ENCODE measurements at regions of chr11 and their contacts with region 1.

Region 1: DNA sequence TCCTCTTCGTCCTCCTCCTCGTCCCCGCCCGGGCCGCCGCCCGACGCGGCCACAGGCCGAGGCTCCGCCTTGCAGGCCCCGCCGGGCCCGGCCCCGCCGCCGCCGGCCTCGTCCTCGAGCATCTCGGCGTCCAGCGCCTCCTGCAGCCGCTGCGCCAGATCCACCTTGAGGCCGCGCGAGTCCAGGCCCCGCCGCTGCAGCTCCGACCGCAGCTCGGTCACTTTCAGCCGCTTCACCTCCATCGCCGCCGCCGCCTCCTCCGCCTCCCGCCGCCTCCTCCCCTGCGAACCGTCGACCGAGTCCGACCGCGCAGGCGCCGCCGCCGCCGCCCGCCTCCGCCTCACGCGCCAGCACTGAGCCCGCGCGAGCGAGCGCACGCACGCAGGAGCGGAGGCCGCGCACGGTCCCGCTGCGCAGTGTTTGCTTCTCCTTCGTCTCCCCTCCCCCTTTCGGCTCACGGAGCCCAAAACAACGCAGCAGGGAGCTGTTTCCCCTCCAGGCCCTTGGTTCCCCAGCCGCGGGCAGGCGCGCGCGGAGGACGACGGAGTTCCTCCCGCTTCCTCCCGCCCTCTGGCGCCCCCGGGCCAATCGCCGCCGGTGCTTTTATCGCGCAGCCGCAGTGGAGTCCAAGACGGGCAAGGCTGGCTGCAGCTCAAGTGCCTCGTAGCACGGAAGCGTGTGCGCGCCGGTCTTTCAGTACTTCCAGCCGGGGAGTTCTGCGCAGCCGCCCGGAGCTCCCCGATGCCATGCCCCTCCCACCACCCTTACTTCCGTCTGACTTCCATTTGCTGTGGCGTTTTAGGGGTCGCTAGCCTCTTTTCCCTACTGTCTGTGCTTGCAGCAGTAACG is at the start of gene HNRNPUL2:
- DNase-seq: peak; percentile 97
- ATAC-seq: peak; percentile 89
- H3K4me3 ChIP-seq: peak within 1 kb of the TSS; percentile 91 to 100 (median 94)
- H3K27ac ChIP-seq: peak within 1 kb of the TSS; percentile 99
- H3K4me1 ChIP-seq: peaks cover 46% of the 10 kb centered on the region
- H3K27me3 ChIP-seq: peaks cover 0 to 3% of the 10 kb centered on the region in 2 experiments; a peak in 1 of 5 replicates
- CTCF ChIP-seq: peak; percentile 33
- EP300 ChIP-seq: no peak
- POLR2A ChIP-seq: peak; percentile 87 to 91
- RAD21 ChIP-seq: peak; percentile 53; the same call in 1 of the 2 replicates
- total RNA-seq, gene HNRNPUL2: 8.4 and 9.6 TPM in 2 replicates

Region 2: DNA sequence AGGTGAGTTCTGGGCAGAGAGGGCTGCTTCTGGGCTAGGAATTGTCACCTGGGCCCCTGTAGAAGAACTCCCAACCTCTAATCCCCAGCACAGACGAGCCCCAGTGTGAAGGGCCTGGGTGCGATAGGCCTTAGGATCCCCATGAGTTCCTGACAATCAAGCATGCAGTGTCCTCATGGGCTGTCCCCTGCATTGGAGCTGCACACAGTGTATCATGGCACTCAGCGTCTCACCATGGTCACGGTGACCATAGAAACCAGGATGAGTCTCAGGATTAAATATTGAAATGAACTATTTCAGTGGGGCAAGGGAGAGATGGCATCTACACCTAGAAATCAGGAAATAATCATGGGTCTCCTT is 518.4 kb before region 1 on chr11:
- CTCF ChIA-PET with region 1: no interaction called
- POLR2A ChIA-PET with region 1: no interaction called
- in situ Hi-C with region 1: no loop called
- intact Hi-C with region 1: no loop called
- DNase-seq: no peak
- ATAC-seq: no peak
- H3K4me3 ChIP-seq: no peak overlapping the region
- H3K27ac ChIP-seq: no peak overlapping the region
- H3K4me1 ChIP-seq: no peaks in the 10 kb centered on the region
- H3K27me3 ChIP-seq: peaks cover 0 to 18% of the 10 kb centered on the region in 2 experiments; a peak in 2 of 5 replicates
- CTCF ChIP-seq: no peak
- EP300 ChIP-seq: no peak
- POLR2A ChIP-seq: no peak
- RAD21 ChIP-seq: no peak

Region 3: DNA sequence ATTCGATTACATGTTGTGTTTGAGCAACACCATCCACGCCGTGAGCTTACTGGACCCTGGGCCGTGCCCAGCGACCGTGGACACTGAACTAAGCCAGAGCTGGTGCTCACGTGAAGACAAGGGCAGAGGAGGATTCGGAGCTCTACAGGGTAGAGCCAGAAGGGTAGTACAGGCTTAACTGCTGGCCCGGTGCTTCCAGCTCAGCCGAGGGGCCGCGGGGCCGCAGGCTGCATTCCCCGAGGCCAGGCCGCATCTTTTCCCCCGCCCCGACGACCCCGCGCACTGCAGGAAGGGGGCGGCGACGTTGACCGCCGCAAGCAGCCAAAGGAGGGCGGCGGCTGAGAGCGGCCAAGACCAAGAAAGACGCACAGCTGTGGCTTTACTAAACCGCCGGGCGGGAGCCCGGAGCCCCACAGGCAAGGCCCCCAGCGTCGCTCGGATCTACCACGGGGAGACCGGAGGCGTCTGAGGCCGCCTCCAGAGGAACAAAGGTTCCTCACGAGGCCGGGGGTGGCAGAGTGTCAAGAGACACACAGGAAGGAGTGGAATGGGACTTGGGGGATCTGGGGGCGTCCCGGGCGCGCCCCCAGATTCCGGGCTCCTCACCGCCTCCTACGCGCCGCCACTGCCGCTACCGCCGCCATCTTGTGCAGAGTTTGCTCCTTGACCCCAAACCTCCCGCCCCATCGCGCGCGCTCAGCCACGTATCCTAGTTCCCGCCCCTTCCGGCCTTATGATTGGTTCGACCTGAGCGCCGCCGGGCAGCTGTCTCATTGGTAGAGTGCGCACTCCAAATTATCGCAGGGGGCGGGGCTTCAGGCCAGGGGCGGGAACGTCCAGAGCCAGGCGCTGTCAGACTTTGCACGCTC is 80.9 kb before region 1 on chr11 and contains the start of gene GANAB:
- CTCF ChIA-PET with region 1: no interaction called
- POLR2A ChIA-PET with region 1: interaction called, 13 read pairs
- in situ Hi-C with region 1: no loop called
- intact Hi-C with region 1: no loop called
- DNase-seq: peak; percentile 95
- ATAC-seq: peak; percentile 94
- H3K4me3 ChIP-seq: peak within 1 kb of the TSS; percentile 86 to 96 (median 90)
- H3K27ac ChIP-seq: peak within 1 kb of the TSS; percentile 98
- H3K4me1 ChIP-seq: peaks cover 53% of the 10 kb centered on the region
- H3K27me3 ChIP-seq: no peaks in the 10 kb centered on the region
- CTCF ChIP-seq: no peak
- EP300 ChIP-seq: no peak; a peak in 1 of 4 replicates
- POLR2A ChIP-seq: peak; percentile 92 to 95
- RAD21 ChIP-seq: no peak
- total RNA-seq, gene GANAB: 50.8 and 99.5 TPM in 2 replicates

Region 4: DNA sequence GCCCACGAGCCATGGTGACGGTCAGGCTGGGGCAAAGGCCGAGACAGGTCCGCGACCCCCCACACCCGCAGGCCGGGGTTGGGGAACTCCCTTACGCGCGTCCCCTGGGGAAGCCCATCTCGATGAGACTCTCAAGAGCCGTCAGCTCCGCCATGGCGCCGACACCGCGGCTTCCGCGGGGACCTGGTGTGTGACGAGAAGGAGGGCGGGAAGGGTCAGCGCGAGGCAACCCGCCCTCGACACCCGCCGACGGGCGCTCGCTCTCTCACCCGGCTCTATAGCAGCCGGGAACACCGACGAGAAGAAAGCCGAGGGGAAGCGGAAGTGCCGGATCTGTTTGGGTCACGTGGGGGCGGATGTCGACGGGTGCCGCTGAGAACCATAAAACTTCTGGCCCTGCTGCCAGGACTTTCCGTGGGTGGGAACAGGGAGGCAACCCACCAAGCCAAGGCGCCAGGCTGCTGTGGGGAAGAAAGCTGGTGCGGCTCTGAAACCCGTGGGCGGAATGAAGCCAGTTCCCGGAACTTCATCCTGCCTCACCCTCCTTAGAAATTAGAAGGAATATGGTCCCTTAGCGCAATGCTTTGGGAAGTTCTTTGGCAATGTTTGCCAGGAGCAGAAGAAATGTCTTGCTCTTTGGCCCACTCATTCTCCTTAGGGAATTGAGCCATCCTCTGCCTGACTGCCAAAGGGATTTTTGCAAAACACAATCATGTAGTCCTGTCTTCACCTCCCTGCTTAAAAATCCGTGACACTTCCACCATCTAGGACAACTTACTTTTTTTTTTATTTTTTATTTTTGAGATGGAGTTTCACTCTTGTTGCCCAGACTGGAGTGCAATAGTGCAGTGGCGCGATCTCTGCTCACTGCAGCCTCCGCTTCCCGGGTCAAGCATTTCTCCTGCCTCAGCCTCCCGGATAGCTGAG is 48.1 kb before region 1 on chr11 and contains the start of gene UBXN1:
- CTCF ChIA-PET with region 1: no interaction called
- POLR2A ChIA-PET with region 1: interaction called, 16 read pairs
- in situ Hi-C with region 1: no loop called
- intact Hi-C with region 1: no loop called
- DNase-seq: peak; percentile 79
- ATAC-seq: peak; percentile 79
- H3K4me3 ChIP-seq: peak within 1 kb of the TSS; percentile 88 to 98 (median 94)
- H3K27ac ChIP-seq: peak within 1 kb of the TSS; percentile 86
- H3K4me1 ChIP-seq: peaks cover 37% of the 10 kb centered on the region
- H3K27me3 ChIP-seq: no peaks in the 10 kb centered on the region
- CTCF ChIP-seq: no peak
- EP300 ChIP-seq: no peak
- POLR2A ChIP-seq: peak; percentile 72 to 79
- RAD21 ChIP-seq: no peak; the same call in 1 of the 2 replicates
- total RNA-seq, gene UBXN1: 52.4 and 58.9 TPM in 2 replicates

Region 5: GRCh38 chr11:62694455-62695167 is 32.5 kb before region 1 on chr11:
- CTCF ChIA-PET with region 1: no interaction called
- POLR2A ChIA-PET with region 1: no interaction called
- in situ Hi-C with region 1: no loop called
- intact Hi-C with region 1: no loop called
- DNase-seq: peak; percentile 70
- ATAC-seq: peak; percentile 86
- H3K4me3 ChIP-seq: no peak overlapping the region
- H3K27ac ChIP-seq: no peak overlapping the region
- H3K4me1 ChIP-seq: no peaks in the 10 kb centered on the region
- H3K27me3 ChIP-seq: no peaks in the 10 kb centered on the region
- CTCF ChIP-seq: peak; percentile 85
- EP300 ChIP-seq: no peak
- POLR2A ChIP-seq: no peak
- RAD21 ChIP-seq: peak; percentile 56

Region 6: DNA sequence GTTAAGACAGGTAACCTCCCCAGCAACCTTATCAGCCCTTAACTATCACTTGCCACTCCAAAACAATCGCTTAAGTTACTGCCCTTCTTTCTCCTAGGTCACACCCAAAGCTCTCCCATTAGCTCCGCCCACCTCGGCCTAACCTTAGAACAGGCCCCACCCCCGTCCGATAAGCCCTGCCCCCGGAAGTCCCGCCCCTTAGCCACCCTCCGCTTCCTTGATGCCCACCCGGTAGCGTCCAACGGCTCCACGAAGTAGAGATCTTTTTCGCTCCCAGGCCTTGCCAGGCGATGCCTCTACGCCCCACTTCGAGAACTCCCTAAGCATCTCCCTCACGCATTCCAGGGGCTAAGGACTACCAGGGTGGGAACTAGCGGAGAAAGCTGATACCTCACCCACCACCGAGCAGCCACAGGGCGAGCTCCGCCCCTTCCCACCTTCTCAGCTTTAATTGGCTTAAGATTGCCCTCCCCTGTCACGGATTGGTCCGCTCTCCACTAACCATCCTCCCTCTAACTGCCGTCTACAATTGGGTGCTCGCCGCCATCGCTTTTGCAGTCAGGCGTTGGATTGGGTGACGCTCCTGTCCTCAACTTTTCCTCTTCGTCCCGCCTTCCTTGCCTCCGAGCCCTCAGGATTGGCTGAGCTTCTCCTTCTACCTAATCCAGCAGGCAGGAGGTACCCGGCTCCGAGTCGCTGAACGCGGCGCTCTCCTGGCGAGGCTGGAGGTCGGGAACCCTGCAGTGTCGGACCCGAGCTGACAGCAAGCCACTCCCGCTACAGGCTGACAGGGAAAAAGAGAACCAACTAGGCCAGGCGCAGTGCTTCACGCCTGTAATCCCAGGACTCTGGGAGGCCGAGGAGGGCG is 26.8 kb after region 1 on chr11 and contains the start of gene ZBTB3:
- CTCF ChIA-PET with region 1: no interaction called
- POLR2A ChIA-PET with region 1: interaction called, 129 read pairs
- in situ Hi-C with region 1: no loop called
- intact Hi-C with region 1: no loop called
- DNase-seq: peak; percentile 99
- ATAC-seq: peak; percentile 96
- H3K4me3 ChIP-seq: peak within 1 kb of the TSS; percentile 55 to 86 (median 81)
- H3K27ac ChIP-seq: peak within 1 kb of the TSS; percentile 75
- H3K4me1 ChIP-seq: peaks cover 35% of the 10 kb centered on the region
- H3K27me3 ChIP-seq: no peaks in the 10 kb centered on the region
- CTCF ChIP-seq: peak; percentile 29; the same call in 1 of the 2 replicates
- EP300 ChIP-seq: no peak
- POLR2A ChIP-seq: peak; percentile 83 to 88
- RAD21 ChIP-seq: no peak; the same call in 1 of the 2 replicates
- total RNA-seq, gene ZBTB3: 4.0 and 5.2 TPM in 2 replicates

Region 7: GRCh38 chr11:62805076-62805892 is 78.1 kb after region 1 on chr11 and contains the start of gene NXF1:
- CTCF ChIA-PET with region 1: no interaction called
- POLR2A ChIA-PET with region 1: no interaction called
- in situ Hi-C with region 1: no loop called
- intact Hi-C with region 1: no loop called
- DNase-seq: peak; percentile 85
- ATAC-seq: peak; percentile 85
- H3K4me3 ChIP-seq: peak within 1 kb of the TSS; percentile 86 to 97 (median 92)
- H3K27ac ChIP-seq: peak within 1 kb of the TSS; percentile 58
- H3K4me1 ChIP-seq: peaks cover 23% of the 10 kb centered on the region
- H3K27me3 ChIP-seq: no peaks in the 10 kb centered on the region; a peak in 1 of 5 replicates
- CTCF ChIP-seq: no peak; the same call in 1 of the 2 replicates
- EP300 ChIP-seq: no peak
- POLR2A ChIP-seq: peak; percentile 100
- RAD21 ChIP-seq: peak; percentile 66; the same call in 1 of the 2 replicates
- total RNA-seq, gene NXF1: 26.2 and 30.9 TPM in 2 replicates

Region 8: DNA sequence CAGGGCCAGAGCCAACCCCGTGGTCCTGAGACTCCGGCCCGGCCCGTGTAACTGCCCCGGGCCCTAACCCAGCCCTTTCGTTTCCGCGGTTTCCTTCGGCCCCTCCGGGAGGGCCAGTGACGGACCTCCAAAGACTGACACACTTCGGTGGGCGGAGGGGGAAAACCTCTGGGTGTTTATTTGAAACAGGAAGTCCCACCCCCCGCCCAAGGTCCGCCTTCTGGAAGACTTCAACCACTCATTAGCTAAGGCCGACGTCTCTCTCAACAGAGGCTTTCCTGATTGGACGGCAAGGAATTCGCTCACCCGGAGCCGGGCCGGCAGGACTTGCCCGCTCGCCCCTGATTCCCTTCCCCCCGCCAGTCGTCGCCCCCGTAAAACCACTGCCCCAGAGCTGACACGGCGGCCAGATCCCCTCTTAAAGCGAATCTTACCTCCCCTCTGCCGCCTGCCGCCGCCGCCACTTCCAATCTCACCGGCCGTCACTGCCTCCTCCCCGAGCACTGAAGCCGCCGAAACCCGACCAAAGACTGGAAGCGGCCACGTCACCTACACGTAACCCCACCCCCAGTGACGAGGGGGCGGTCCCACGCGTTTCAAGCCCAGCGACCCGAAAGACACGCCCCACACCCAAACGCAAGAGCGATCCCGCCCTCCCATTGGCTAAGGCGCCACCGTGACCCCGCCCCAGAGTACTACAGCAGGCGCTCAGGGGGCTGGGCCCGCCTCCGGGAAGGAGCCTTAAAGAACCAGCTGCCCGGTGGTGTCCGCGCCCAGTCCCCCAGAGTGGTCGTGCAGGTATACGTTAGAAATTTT is 104.6 kb after region 1 on chr11 and contains the start of gene STX5:
- CTCF ChIA-PET with region 1: no interaction called
- POLR2A ChIA-PET with region 1: interaction called, 20 read pairs
- in situ Hi-C with region 1: no loop called
- intact Hi-C with region 1: no loop called
- DNase-seq: peak; percentile 97
- ATAC-seq: peak; percentile 90
- H3K4me3 ChIP-seq: peak within 1 kb of the TSS; percentile 78 to 100 (median 99)
- H3K27ac ChIP-seq: peak within 1 kb of the TSS; percentile 95
- H3K4me1 ChIP-seq: peaks cover 32% of the 10 kb centered on the region
- H3K27me3 ChIP-seq: no peaks in the 10 kb centered on the region; a peak in 1 of 5 replicates
- CTCF ChIP-seq: no peak
- EP300 ChIP-seq: no peak
- POLR2A ChIP-seq: peak; percentile 79 to 88
- RAD21 ChIP-seq: no peak
- total RNA-seq, gene STX5: 26.9 and 29.2 TPM in 2 replicates

Measured in HepG2 (cell line).